H1 (cell line): ENCODE measurements at regions of chr19 and their contacts with region 1.

Region 1: GRCh38 chr19:4139614-4140236 is 13.7 kb upstream of the CREB3L3 start:
- DNase-seq: peak; percentile 21 to 99
- H3K4me3 ChIP-seq: no peak overlapping the region
- H3K27ac ChIP-seq: no peak overlapping the region
- H3K4me1 ChIP-seq: no peaks in the 10 kb centered on the region; a peak in 1 of 7 replicates
- H3K27me3 ChIP-seq: no peaks in the 10 kb centered on the region; a peak in 1 of 7 replicates
- CTCF ChIP-seq: peak; percentile 81 to 98 (median 93)
- EP300 ChIP-seq: no peak
- POLR2A ChIP-seq: no peak
- RAD21 ChIP-seq: peak; percentile 40 to 52

Region 2: DNA sequence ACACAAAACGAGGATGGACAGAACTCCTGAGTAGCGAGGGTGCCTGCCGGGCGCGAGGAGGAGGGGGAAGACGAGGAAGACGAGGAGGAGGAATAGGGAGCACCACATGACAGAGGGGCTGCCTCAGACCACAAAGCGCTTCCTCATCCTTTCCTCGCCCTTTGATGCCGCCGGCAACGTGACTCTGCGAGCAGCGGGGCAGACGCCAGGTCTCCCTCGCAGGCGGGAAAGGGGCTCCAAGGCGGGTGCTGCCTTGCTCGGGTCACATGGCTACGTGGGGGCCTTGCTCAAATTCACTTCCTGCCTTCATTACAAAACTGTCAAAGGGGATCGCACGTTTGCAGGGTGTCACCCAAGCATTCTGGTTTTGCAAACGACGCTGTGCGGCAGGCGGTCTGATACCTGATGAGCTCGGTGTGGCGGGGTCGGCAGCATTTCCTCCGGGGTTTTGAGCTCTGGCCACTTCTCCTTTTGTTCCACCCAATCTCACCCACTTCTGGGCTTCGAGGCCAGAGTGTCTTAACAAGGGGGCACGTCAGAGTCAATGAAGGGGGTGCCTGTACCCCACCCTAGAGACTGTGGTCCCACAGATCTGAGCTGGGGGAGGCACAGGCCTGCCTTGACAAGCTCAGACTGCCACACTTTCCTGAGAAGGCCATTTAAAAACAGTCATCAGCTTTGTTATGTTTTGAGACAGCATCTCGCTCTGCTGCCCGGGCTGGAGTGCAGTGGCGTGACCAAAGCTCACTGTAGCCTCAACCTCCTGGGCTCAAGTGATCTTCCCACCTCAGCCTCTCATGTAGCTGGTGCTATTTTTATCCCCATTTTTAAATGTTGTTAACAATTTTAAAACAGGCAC is 30.7 kb before region 1 on chr19:
- CTCF ChIA-PET with region 1: interaction called, 42 read pairs
- POLR2A ChIA-PET with region 1: no interaction called
- DNase-seq: no peak
- H3K4me3 ChIP-seq: no peak overlapping the region
- H3K27ac ChIP-seq: no peak overlapping the region
- H3K4me1 ChIP-seq: no peaks in the 10 kb centered on the region
- H3K27me3 ChIP-seq: no peaks in the 10 kb centered on the region
- CTCF ChIP-seq: no peak
- EP300 ChIP-seq: no peak
- POLR2A ChIP-seq: no peak
- RAD21 ChIP-seq: no peak

Region 3: DNA sequence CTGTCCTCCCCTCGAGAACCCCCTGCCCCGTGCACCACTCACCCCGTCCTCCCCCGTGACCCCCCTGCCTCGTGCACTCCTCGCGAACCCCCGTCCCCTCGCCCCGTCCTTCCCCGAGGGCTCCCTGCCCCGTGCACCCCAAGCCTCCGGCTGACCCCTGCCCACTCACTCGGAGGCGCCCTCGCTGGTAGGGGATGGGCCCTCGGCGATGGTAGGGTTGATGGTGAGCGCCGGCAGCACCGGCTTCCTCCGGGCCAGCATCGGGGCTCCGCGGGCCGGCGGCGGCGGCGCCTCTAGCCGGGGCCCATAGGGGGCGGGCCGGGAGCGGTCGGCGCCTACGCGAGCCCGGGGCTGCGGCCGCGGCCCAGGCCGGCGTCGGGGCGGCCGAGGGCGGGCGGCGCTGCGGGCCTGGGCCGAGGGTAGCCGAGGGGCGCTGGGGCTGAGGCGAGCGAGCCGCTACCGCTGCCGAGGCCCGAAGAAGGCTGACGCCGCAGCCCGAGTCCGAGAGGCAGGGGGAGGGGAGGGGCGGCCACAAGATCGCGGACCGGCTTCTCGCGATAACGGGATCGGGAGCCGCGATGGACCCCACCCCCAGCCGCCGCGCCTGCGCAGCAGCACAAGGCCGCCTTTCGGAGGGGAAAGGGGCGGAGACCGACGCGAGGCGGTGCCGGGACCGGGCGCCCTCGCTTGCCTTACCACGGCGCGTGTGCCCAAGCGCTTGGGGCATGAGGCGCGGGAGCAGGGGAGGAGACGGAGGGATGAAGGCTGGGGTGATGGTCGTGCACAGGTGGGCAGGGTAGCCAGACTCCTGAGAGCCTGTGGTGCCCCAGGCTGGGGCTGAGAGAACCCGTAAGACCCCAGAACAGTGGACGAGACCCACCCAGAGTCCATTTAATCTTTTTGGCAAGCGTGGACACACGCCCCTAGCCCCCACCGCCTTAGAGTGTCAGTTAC is 15.8 kb before region 1 on chr19 and contains the start of gene MAP2K2:
- CTCF ChIA-PET with region 1: interaction called, 66 read pairs
- POLR2A ChIA-PET with region 1: interaction called, 4 read pairs
- DNase-seq: peak; percentile 69 to 99
- H3K4me3 ChIP-seq: peak within 1 kb of the TSS; percentile 76 to 92 (median 84)
- H3K27ac ChIP-seq: no peak within 1 kb of the TSS; the same call in 1 of the 2 replicates
- H3K4me1 ChIP-seq: peaks cover 0 to 9% (median 3%) of the 10 kb centered on the region in 4 experiments; a peak in 3 of 7 replicates
- H3K27me3 ChIP-seq: no peaks in the 10 kb centered on the region
- CTCF ChIP-seq: no peak
- EP300 ChIP-seq: no peak
- POLR2A ChIP-seq: peak in 1 of 2 experiments; percentile 81; a peak in 2 of 3 replicates
- RAD21 ChIP-seq: no peak
- total RNA-seq, gene MAP2K2: 161 and 162 TPM in 2 replicates

Region 4: DNA sequence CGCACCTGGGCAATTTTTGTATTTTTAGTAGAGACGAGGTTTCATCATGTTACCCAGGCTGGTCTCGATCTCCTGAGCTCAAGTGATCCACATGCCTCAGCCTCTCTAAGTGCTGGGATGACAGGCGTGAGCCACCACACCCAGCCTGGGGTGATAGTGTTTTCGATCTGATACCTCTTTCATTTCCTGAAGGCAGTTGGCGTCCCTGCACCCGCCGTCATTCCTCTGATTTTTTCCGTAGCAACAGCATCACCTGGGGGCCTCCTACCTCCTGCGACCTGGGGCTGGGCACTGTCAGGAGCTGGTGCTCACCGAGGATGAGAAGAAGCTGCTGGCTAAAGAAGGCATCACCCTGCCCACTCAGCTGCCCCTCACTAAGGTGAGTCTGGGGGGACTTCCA is 24.5 kb after region 1 on chr19:
- CTCF ChIA-PET with region 1: interaction called, 32 read pairs
- POLR2A ChIA-PET with region 1: no interaction called
- DNase-seq: no peak
- H3K4me3 ChIP-seq: no peak overlapping the region
- H3K27ac ChIP-seq: no peak overlapping the region
- H3K4me1 ChIP-seq: no peaks in the 10 kb centered on the region
- H3K27me3 ChIP-seq: peaks cover 0 to 2% (median 0%) of the 10 kb centered on the region in 4 experiments; a peak in 2 of 7 replicates
- CTCF ChIP-seq: no peak
- EP300 ChIP-seq: no peak
- POLR2A ChIP-seq: no peak
- RAD21 ChIP-seq: no peak

Region 5: GRCh38 chr19:4178990-4179389 is 39.3 kb after region 1 on chr19:
- CTCF ChIA-PET with region 1: interaction called, 12 read pairs
- POLR2A ChIA-PET with region 1: no interaction called
- DNase-seq: no peak
- H3K4me3 ChIP-seq: no peak overlapping the region
- H3K27ac ChIP-seq: no peak overlapping the region
- H3K4me1 ChIP-seq: peaks cover 0 to 3% (median under 1%) of the 10 kb centered on the region in 4 experiments; a peak in 2 of 7 replicates
- H3K27me3 ChIP-seq: no peaks in the 10 kb centered on the region
- CTCF ChIP-seq: no peak
- EP300 ChIP-seq: no peak
- POLR2A ChIP-seq: no peak
- RAD21 ChIP-seq: no peak

Region 6: GRCh38 chr19:4208385-4209094 is 68.8 kb after region 1 on chr19:
- CTCF ChIA-PET with region 1: interaction called, 43 read pairs
- POLR2A ChIA-PET with region 1: no interaction called
- DNase-seq: peak in 1 of 2 experiments; percentile 64
- H3K4me3 ChIP-seq: no peak overlapping the region
- H3K27ac ChIP-seq: no peak overlapping the region
- H3K4me1 ChIP-seq: no peaks in the 10 kb centered on the region; a peak in 1 of 7 replicates
- H3K27me3 ChIP-seq: no peaks in the 10 kb centered on the region
- CTCF ChIP-seq: peak; percentile 52 to 71 (median 54); a peak in 3 of 4 replicates
- EP300 ChIP-seq: no peak
- POLR2A ChIP-seq: no peak
- RAD21 ChIP-seq: peak; percentile 33 to 44

Region 7: GRCh38 chr19:4220188-4220587 is 80.5 kb after region 1 on chr19:
- CTCF ChIA-PET with region 1: no interaction called
- POLR2A ChIA-PET with region 1: no interaction called
- DNase-seq: no peak
- H3K4me3 ChIP-seq: no peak overlapping the region
- H3K27ac ChIP-seq: no peak overlapping the region
- H3K4me1 ChIP-seq: no peaks in the 10 kb centered on the region
- H3K27me3 ChIP-seq: no peaks in the 10 kb centered on the region
- CTCF ChIP-seq: no peak
- EP300 ChIP-seq: no peak
- POLR2A ChIP-seq: no peak
- RAD21 ChIP-seq: no peak